ENCODE measurements at regions of chr7 and their contacts with region 1.

Region 1: DNA sequence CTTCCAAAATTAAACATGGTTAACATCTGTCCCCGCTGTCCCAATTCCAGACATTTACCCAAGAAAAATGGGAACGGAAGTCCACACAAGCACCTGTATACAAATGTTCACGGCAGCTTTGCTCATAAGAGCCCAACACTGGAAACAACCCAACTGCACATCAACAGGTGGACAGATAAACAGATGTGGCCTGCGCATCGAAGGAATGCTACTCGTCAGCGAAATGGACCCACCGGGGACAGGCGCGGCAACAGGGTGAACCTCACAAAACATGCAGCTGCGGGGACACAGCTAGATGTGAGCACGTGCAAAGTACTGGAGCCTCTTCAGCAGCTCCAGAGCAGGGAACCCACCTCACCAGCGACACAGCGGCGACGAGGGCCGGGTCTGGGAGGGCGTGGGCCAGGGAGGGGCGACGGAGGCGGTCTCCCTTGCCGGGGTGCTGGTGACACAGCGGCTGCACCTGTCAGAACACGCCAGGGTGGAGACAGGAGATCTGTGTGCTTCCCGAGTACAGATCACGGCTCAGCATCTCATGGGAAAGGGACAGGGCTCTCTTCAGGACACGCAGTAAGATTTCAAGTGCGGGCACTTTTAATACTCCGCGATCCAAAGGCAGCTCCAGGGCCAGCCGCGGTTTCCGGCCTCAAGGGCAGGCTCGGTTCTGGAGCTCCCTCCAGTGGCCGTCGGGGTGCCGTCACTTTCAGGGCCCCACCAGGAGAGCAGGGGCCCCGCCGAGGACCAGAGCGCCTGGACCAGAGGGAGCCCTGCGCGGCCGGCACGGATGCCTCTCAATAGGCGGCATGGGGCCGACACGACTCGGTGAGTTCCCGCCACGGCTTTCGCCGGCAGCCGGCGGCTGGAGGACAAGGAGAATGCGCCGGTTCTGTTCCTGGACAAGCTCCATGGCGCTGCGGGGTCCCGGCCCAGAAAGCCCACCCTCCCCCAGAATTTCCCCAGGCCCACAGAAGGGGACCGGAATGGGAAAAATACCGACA is 21.2 kb downstream of the GPR146 start:
- DNase-seq: no peak
- H3K4me3 ChIP-seq: no peak overlapping the region
- H3K27me3 ChIP-seq: no peaks in the 10 kb centered on the region
- CTCF ChIP-seq: peak; percentile 94

Region 2: DNA sequence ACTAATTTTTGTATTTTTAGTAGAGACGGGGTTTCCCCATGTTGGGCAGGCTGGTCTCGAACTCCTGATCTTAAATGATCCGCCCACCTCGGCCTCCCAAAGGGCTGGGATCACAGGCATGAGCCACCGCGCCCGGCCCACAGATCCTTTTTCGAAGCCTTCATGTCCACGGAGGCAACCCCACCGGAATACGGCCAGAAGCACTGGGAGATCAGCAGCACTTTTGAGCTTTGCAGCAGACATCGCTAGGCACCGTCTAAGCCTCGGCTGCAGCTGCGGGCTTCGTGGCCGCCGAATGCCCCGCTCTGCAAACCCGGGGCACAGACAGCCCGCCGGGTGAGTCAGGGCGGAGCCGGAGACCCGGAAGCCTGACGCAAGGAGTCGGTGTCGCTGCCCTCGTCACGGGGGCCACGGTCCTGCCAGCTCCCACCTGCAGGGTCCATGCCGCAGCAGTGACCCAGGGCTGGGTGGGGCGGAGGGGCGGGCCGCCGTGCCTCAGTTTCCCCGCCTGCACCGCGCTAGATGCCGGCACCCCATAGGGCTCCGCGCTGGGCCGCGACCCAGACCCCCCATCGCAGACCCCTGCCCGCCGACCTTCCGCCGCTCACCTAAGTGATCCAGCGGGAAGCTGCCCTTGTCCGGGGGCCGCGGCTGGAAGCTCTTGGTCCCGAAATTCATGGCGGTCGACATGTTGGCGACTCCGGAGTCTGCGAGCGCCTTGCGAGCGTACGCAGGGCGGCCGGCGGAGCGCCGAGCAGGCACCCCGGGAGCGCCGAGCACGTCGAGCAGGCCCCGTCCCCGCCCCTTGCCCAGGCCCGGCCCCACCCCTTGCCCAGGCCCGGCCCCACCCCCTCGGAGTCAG is 90.5 kb before region 1 on chr7 and contains the start of gene COX19:
- CTCF ChIA-PET with region 1: interaction called, 22 read pairs
- POLR2A ChIA-PET with region 1: no interaction called
- DNase-seq: peak; percentile 26
- H3K4me3 ChIP-seq: peak within 1 kb of the TSS; percentile 100
- H3K27me3 ChIP-seq: no peaks in the 10 kb centered on the region
- CTCF ChIP-seq: no peak
- polyA plus RNA-seq, gene COX19: 5.5 and 5.6 TPM in 2 replicates

Region 3: DNA sequence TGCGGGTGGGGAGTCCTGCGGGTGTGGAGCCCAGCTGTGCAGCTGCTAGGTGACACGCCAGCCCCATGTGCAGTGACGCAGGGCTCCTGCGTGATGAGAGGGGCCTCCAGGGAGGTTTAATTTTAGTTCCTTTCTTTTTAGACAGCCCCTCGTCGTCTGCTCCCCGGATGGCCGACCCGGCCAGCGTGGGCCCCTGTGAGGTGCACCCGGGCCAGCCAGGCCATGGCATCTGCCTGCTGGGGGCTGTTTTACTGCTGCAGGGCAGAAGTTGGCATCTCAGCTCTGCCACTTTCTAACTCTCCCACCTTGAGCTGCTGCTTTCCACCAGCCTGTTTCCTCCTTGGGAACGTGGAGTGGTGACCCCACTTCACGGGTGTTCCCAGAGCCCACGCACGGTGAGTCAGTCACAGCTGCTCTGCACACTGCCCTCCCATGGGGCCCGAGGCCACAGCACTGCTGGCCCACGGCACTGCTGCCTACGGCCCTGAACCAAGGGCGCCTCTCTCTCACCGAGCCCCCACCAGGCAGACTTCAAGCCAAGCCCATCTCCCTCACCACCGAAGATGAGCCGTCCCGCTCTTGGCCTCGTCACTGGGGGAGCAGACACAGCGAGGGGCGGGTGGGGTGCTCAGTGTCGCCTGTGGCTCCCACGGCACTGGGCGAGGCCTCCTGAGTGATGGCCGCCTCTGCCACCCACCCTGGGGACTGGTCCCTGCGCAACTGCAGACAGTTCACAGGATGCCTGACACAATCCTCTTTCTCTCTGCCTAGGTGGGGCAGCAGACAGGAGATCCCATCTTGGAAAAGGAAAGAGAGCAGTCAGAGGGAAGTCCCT is 61.3 kb before region 1 on chr7:
- CTCF ChIA-PET with region 1: interaction called, 367 read pairs
- POLR2A ChIA-PET with region 1: no interaction called
- DNase-seq: no peak
- H3K4me3 ChIP-seq: no peak overlapping the region
- H3K27me3 ChIP-seq: no peaks in the 10 kb centered on the region
- CTCF ChIP-seq: no peak

Region 4: GRCh38 chr7:1053002-1053478 is 12.5 kb before region 1 on chr7:
- CTCF ChIA-PET with region 1: interaction called, 18 read pairs
- POLR2A ChIA-PET with region 1: no interaction called
- DNase-seq: no peak
- H3K4me3 ChIP-seq: no peak overlapping the region
- H3K27me3 ChIP-seq: no peaks in the 10 kb centered on the region
- CTCF ChIP-seq: no peak

Region 5: DNA sequence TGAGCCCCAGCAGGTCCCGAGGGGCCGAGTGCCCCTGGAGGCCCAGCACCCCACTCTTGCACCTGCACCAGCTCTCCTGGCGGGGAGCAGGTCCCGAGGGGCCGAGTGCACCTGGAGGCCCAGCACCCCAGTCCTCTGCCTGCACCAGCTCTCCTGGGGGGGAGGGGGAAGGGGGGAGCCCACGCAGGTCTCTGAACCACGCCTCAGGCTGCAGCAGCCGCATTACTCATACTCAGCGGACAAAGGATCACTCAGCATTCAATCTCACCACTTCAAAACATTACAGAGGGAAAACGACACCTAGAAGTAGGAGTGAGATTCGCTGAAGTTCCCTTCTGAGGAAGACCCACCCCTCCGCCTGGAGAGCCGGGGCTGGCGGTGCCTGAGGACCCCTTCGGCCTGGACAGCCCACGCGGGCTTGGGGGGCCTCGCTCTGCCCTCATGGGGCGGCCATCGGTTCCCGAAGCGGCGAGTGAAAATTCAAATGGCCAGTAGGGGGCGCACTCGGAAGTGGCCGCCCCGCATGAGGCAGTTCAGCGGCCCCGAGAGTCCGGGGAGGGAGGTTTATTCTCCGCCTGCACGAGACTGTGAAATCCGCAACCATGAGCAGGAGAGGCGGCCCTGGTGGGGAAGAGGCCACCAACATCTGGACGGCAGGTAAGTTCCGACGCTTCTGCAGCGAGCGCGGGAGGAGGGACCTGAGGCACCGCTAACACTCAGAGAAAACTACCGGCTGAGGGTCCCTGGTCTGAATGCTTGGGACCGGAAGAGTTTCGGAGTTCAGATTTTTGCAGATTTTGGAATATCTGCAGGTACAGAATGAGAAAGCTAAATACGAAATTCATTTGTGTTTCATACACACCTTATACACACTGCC is 21.3 kb after region 1 on chr7:
- CTCF ChIA-PET with region 1: interaction called, 27 read pairs
- POLR2A ChIA-PET with region 1: no interaction called
- DNase-seq: no peak
- H3K4me3 ChIP-seq: peak overlapping the region; percentile 48
- H3K27me3 ChIP-seq: no peaks in the 10 kb centered on the region
- CTCF ChIP-seq: peak; percentile 89

Measured in BJ (cell line).